AG04450 (cell line): ENCODE measurements at regions of chr16 and their contacts with region 1.

Region 1: GRCh38 chr16:85402910-85403692 is 210.0 kb upstream of the GSE1 start:
- DNase-seq: no peak
- H3K4me3 ChIP-seq: no peak overlapping the region
- H3K27ac ChIP-seq: peak overlapping the region; percentile 2
- H3K27me3 ChIP-seq: no peaks in the 10 kb centered on the region
- CTCF ChIP-seq: no peak

Region 2: GRCh38 chr16:85275533-85276249 is 127.4 kb before region 1 on chr16:
- CTCF ChIA-PET with region 1: no interaction called
- POLR2A ChIA-PET with region 1: no interaction called
- DNase-seq: no peak
- H3K4me3 ChIP-seq: no peak overlapping the region
- H3K27ac ChIP-seq: no peak overlapping the region
- H3K27me3 ChIP-seq: no peaks in the 10 kb centered on the region
- CTCF ChIP-seq: peak; percentile 96

Region 3: GRCh38 chr16:85316321-85316919 is 86.7 kb before region 1 on chr16:
- CTCF ChIA-PET with region 1: no interaction called
- POLR2A ChIA-PET with region 1: no interaction called
- DNase-seq: no peak
- H3K4me3 ChIP-seq: no peak overlapping the region
- H3K27ac ChIP-seq: no peak overlapping the region
- H3K27me3 ChIP-seq: no peaks in the 10 kb centered on the region
- CTCF ChIP-seq: peak; percentile 83

Region 4: DNA sequence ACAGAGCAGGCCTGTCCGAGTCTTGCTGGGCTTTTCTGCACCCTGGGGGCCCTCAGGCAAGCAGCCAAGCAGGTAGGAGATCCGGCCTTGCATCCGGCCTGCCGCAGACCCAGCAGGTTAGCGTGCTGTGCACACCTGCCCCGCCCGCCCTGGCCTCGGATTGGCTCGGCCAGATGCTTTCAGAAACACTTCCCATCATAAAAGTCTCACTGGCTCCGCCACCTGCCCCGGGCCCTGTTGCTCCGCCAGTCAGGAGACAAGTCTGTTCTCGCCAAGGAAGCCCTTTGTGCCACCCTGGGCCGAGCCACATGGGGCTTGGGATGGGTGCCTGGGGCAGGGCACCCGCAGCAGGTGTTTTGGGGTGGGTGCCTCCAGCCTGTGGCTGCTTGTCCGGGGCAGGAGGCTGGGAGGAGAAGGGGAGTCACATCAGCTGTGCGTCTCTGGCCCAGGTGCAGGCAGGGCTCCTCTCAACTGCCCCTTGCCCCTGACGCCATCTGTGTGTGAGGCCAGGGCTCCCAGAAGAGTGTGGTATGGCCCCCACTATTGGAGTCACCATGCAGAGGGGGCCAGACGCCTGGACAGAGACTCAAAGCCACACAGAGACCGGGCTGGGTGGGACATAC is 18.1 kb before region 1 on chr16:
- CTCF ChIA-PET with region 1: no interaction called
- POLR2A ChIA-PET with region 1: no interaction called
- DNase-seq: no peak
- H3K4me3 ChIP-seq: no peak overlapping the region
- H3K27ac ChIP-seq: no peak overlapping the region
- H3K27me3 ChIP-seq: no peaks in the 10 kb centered on the region
- CTCF ChIP-seq: no peak

Region 5: DNA sequence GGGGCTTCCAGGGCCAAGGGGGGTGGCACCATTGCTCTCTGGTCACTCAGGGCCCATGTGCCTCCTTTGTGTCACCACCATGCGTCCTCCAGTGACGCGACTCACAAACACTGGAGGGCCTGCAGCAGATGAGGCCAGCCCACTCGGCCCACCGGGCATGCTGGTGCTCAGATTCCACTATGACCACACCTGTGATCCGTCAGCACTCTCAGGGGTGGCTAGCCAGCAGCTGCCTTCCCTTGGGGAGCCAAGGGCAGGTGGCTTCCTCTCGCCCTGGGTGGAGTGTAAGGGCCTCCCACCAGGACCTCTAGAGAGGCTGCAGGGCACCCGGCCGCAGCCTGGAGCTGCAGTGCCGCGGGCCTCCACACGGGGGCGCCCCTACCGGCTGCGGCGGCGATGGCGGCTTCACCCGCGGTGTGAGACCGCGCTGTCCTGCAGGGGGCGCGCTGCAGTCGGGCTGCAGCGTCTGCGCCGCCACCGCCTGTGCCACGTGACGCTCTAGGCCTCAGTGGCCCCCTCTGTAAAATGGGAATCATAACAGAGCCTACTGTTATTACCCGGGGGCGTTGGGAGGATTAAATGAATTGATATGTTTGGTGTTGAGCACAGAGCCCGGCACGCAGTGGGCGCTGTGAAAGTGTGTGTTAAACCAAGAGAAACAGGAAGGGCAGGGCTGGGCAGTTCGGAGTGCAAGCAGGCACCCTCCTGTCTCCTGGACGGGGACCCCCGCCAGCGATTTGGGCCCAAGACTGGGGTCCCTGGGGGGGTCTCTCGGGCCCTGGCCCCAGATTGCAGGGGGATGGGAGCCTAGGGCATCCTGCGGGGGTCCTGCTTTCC is 17.6 kb after region 1 on chr16:
- CTCF ChIA-PET with region 1: interaction called, 13 read pairs
- POLR2A ChIA-PET with region 1: no interaction called
- DNase-seq: no peak
- H3K4me3 ChIP-seq: no peak overlapping the region
- H3K27ac ChIP-seq: no peak overlapping the region
- H3K27me3 ChIP-seq: no peaks in the 10 kb centered on the region
- CTCF ChIP-seq: peak; percentile 81